Sciatic nerve (tissue), 2 donors: ENCODE measurements at regions of chr12 and their contacts with region 1.

Region 1: GRCh38 chr12:131850856-131851559 is 22.8 kb downstream of the MMP17 start:
- DNase-seq: no peak
- ATAC-seq: peak; percentile 47

Region 2: GRCh38 chr12:132021031-132021871 is 170.2 kb after region 1 on chr12:
- intact Hi-C with region 1: loop called (anchors 10 kb)
- DNase-seq: peak; percentile 51
- ATAC-seq: peak; percentile 24